Right cardiac atrium (tissue), 5 donors: ENCODE measurements at regions of chr3 and their contacts with region 1.

Region 1: GRCh38 chr3:146065573-146066006 is 95.4 kb downstream of the PLOD2 start:
- DNase-seq: no peak
- ATAC-seq: no peak
- H3K4me3 ChIP-seq: no peak overlapping the region
- H3K27ac ChIP-seq: no peak overlapping the region
- H3K4me1 ChIP-seq: no peaks in the 10 kb centered on the region
- H3K27me3 ChIP-seq: no peaks in the 10 kb centered on the region

Region 2: DNA sequence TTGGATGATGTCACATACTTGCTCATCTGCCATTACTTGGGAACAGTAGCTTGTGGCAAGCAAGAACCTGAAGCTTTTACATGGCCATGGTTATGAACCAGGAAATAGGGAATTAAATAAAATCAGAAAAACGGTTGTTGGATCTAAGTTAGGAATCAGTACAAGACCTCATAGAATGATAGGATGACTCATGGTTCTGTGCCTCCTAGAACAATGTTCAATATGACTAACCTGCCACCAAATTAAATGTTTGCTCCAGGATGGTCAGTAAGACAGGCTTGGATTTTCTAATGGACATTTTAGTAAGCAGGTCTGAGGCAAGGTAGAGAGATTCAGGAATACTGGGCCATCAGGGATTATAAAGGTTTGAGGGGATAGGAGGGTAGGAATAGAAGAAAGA is 123.5 kb before region 1 on chr3:
- intact Hi-C with region 1: no loop called
- DNase-seq: no peak
- ATAC-seq: no peak
- H3K4me3 ChIP-seq: no peak overlapping the region
- H3K27ac ChIP-seq: no peak overlapping the region
- H3K4me1 ChIP-seq: no peaks in the 10 kb centered on the region
- H3K27me3 ChIP-seq: no peaks in the 10 kb centered on the region

Region 3: DNA sequence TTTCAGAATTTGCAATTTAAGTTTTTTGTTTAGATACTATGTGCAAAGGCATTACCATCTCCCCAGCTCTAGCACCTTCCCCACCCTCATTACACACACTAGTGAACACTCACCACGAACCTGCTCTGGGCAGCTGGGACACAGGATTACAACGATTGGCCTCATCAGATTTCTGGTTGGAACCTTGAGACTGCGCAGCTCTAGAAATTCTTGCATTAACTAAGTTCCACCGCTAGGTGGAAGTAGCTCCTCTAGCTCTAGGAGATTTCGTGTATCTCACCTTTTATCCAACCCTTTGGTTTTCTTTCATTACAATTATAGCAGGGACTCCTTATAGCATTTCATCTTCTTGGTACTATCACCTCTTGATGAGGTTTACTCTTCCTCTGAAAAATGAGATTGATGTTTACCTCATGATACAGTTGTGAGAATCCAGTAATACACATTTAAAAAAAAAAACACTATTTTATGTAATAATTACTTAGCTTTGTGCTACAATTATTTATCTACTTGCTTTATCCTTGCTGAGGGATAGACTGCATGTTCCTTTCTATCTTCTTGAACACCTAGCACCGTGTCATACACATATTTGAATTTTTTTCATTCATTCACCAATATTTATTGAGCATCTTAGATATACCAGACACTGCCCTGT is 124.1 kb after region 1 on chr3:
- intact Hi-C with region 1: loop called (anchors 2 to 10 kb)
- DNase-seq: no peak
- ATAC-seq: peak; percentile 76 to 85
- H3K4me3 ChIP-seq: no peak overlapping the region
- H3K27ac ChIP-seq: no peak overlapping the region
- H3K4me1 ChIP-seq: no peaks in the 10 kb centered on the region
- H3K27me3 ChIP-seq: no peaks in the 10 kb centered on the region

Region 4: GRCh38 chr3:146326670-146327543 is 261.3 kb after region 1 on chr3:
- intact Hi-C with region 1: loop called in 2 of 4 experiments (anchors 5 to 10 kb)
- DNase-seq: peak in 2 of 3 donors; percentile 34 to 72
- ATAC-seq: peak; percentile 88 to 91
- H3K4me3 ChIP-seq: no peak overlapping the region
- H3K27ac ChIP-seq: no peak overlapping the region
- H3K4me1 ChIP-seq: no peaks in the 10 kb centered on the region
- H3K27me3 ChIP-seq: no peaks in the 10 kb centered on the region

Region 5: DNA sequence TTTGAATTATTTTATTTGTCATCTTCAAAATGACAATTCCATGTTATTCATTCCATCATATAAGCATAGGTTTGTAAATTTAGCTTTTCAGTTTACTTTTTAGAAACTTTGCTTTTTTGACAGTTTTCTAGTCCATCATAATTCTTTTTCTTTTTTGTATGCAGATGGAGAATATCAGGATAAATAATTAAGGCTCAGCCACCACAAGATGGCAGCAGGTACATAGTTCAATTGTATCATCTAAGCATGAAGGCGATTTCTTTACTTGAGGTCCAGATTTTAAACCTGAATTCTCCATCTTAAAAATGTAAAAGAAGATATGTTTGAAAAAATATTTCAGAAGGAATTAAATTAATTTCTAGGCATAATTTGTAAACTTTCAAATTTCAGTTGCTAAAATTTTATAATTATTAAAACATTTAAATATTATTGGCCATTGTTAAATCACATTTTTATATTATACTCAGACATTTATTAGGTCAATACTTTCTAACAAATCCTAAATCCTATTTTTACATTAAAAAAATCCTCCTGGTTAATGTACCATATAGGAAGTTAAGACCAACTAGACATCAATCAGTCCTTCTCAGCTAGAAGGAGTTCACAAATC is 524.4 kb after region 1 on chr3:
- intact Hi-C with region 1: loop called in 1 of 4 experiments (anchors 10 kb)
- DNase-seq: peak in 1 of 3 donors; percentile 55
- ATAC-seq: peak in 1 of 2 donors; percentile 51
- H3K4me3 ChIP-seq: no peak overlapping the region
- H3K27ac ChIP-seq: no peak overlapping the region
- H3K4me1 ChIP-seq: no peaks in the 10 kb centered on the region
- H3K27me3 ChIP-seq: no peaks in the 10 kb centered on the region